ENCODE measurements at regions of chr10 and their contacts with region 1.

Region 1: DNA sequence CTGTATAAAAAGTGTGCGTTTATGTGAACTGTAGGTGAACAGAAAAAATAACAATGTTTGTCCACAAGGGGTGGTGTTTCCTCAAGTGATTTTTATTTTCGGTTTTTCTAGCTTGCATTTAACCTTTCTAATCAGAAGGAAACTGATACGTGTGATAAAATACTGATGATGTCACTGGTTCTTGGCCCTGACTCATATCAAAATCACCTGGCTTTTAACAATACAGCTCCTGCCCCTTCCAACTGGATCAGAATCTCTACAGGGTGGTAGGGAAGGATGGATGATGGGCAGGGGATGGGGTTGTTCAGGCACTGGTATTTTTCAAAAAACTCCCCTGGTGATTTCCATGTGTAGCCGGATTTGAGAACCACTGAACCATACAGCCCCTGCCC is 10.9 kb downstream of the NPFFR1 start:
- DNase-seq: no peak
- H3K4me3 Mint-ChIP-seq: no peak overlapping the region
- H3K27ac Mint-ChIP-seq: no peak overlapping the region
- H3K4me1 Mint-ChIP-seq: peaks cover 23% of the 10 kb centered on the region
- H3K27me3 Mint-ChIP-seq: peaks cover 13% of the 10 kb centered on the region

Region 2: DNA sequence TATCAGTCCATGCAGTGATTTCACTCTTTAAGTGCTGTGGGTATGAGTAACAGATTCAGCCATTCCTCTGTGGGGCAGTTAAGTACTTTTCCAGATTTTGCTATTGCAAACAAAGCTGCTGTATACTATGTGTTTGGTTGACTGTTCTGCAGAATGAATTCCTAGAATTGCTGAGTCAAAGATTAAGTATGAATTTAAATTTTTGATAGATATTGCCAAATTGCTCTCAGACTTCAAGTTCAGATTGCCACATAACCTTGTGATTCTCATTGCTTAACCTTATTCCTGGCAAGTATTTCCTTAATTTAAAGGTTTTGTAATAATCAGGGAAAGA is 81.0 kb before region 1 on chr10:
- CTCF ChIA-PET with region 1: no interaction called
- DNase-seq: no peak
- H3K4me3 Mint-ChIP-seq: no peak overlapping the region
- H3K27ac Mint-ChIP-seq: no peak overlapping the region
- H3K4me1 Mint-ChIP-seq: peaks cover under 1% of the 10 kb centered on the region
- H3K27me3 Mint-ChIP-seq: no peaks in the 10 kb centered on the region

Region 3: GRCh38 chr10:70283445-70284399 is 10.8 kb after region 1 on chr10 and contains the start of gene NPFFR1:
- CTCF ChIA-PET with region 1: interaction called, 16 read pairs
- DNase-seq: peak; percentile 15
- H3K4me3 Mint-ChIP-seq: no peak within 1 kb of the TSS
- H3K27ac Mint-ChIP-seq: no peak within 1 kb of the TSS
- H3K4me1 Mint-ChIP-seq: no peaks in the 10 kb centered on the region
- H3K27me3 Mint-ChIP-seq: peaks cover 78% of the 10 kb centered on the region

Measured in activated naive CD4-positive, alpha-beta T cell treated with anti-CD3 and anti-CD28 coated beads, Interleukin-2, amount 10 ng/mL, durations not matched to agents 7 days and 5 days (primary cell).